GM10248 (cell line): ENCODE measurements at regions of chr6 and their contacts with region 1.

Region 1: DNA sequence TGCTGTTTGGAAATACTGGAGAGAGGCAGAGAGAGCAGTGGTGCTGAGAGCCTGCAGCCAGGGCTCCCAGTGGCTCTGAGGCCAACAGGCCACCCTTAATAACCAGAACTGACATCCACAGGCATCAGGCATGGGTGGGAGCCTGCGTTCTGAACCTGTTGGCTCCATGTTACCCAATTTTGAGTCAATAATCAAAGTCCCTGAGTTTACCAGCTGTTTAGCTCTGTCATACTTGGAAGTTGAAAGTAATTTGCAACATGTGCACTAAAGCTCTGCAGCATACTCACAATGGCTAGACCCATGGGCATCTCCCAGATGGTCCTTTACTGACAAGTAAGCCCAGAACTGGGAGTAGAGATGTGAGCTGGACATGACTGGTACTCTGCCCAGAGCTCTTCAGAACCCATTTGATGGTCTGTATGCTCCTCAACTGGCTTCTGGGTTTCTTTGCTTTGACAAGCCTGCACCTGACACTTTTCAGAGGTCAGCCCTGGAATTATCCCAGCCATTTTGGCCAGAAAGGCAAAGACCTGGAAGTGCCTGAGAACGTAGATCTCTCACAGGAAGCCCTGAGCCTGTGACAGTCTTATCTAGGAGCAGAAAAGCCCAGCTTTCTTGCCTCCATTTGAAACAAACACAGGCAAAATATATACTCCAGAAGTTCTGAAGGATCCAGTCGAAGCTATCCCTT is 122.4 kb upstream of the CITED2 start:
- DNase-seq: no peak
- CTCF ChIP-seq: no peak

Region 2: GRCh38 chr6:139392794-139393193 is 104.0 kb before region 1 on chr6:
- CTCF ChIA-PET with region 1: no interaction called
- POLR2A ChIA-PET with region 1: no interaction called
- DNase-seq: peak; percentile 63
- CTCF ChIP-seq: no peak

Region 3: DNA sequence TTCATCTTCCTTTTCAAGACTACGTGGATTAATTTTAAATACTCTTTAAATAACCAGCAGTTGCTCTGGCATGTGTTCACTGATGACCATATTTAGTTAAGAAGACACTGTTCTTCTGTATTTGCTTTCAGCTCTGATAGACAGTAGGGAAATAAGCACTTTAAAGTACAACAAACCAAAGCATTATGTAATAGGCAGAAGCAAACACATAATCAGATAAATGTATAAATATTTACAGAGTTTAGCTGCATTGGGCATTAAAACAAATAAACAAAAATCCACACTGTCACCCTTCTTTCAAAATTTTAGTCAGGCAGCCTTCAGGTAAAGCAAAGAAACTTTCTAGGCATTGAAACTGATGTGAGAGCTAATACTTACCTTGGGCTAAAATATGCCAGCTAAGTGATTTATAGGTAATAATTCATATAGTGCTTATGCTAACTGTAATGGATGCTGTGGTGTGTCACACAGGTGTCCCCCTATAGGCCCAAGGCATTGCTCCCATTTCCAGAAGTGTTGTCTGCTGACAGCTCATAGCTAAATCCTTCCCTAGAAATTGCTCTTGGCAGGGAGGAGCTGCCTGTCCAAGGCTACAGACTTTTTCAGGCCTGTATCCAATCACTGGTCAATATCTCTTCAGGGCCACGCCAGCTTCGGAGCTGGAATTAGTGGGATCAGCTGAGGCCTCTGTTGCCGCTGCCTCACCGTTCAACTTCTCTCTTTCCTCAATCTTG is 10.9 kb before region 1 on chr6:
- CTCF ChIA-PET with region 1: interaction called, 10 read pairs
- POLR2A ChIA-PET with region 1: no interaction called
- DNase-seq: no peak
- CTCF ChIP-seq: no peak

Region 4: GRCh38 chr6:139518556-139519091 is 21.8 kb after region 1 on chr6:
- CTCF ChIA-PET with region 1: no interaction called
- POLR2A ChIA-PET with region 1: no interaction called
- DNase-seq: no peak
- CTCF ChIP-seq: no peak

Region 5: DNA sequence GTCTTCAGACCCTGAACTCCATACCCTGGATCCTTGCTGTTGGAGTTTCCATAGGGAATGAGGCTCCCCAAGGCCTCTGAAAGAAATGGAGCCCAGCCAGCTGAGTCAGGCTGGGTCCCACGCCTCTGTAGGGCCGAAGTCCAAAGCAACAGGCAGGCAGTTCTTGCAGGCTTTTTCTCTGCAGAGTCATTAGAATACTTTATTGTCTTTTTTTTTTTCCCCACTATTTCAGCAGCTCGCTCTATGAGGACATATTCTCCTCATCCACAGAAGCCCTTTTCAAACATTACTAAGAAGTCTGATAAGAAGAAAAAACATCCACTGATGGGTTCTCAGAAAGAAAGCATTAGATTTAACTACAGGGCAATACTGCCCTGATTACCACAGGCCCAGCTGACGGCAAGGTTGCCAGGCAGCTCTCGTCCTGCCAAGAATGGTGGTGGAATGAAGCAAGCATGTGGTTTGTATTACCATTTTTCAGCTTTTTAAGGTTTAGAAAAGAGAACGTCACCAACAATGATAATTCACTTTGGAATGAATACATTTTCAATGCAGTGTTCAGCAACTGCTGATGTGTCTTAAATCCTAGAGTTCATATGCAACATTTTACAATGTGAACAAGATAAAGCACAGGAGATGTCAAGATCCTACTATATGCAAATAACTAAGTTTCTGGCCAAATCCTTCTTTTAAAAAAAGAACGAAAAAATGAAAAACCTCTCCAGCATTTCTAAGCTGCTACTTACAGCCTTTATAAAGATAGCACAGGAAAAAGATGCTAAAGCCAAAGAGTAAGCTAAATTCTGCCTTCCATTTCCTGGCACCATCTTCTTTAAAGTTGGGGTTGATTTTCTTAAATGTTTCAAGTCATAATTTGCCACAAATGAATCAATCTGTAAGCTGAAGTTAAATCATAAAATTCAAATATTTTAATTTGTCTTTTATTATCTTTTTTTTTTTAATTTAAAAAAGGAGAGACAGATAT is 101.3 kb after region 1 on chr6:
- CTCF ChIA-PET with region 1: no interaction called
- POLR2A ChIA-PET with region 1: no interaction called
- DNase-seq: no peak
- CTCF ChIP-seq: no peak